Right cardiac atrium (tissue), 5 donors: ENCODE measurements at regions of chr1 and their contacts with region 1.

Region 1: GRCh38 chr1:231211005-231211857 is 29.8 kb upstream of the GNPAT start:
- DNase-seq: peak; percentile 64 to 88 (median 87)
- ATAC-seq: peak; percentile 73 to 79
- H3K4me3 ChIP-seq: no peak overlapping the region
- H3K27ac ChIP-seq: no peak overlapping the region
- H3K4me1 ChIP-seq: no peaks in the 10 kb centered on the region
- H3K27me3 ChIP-seq: no peaks in the 10 kb centered on the region

Region 2: GRCh38 chr1:230797942-230798418 is 413.3 kb before region 1 on chr1:
- intact Hi-C with region 1: loop called (anchors 5 kb)
- DNase-seq: peak; percentile 59 to 76 (median 71)
- ATAC-seq: peak; percentile 86 to 88
- H3K4me3 ChIP-seq: no peak overlapping the region
- H3K27ac ChIP-seq: no peak overlapping the region
- H3K4me1 ChIP-seq: no peaks in the 10 kb centered on the region
- H3K27me3 ChIP-seq: no peaks in the 10 kb centered on the region

Region 3: DNA sequence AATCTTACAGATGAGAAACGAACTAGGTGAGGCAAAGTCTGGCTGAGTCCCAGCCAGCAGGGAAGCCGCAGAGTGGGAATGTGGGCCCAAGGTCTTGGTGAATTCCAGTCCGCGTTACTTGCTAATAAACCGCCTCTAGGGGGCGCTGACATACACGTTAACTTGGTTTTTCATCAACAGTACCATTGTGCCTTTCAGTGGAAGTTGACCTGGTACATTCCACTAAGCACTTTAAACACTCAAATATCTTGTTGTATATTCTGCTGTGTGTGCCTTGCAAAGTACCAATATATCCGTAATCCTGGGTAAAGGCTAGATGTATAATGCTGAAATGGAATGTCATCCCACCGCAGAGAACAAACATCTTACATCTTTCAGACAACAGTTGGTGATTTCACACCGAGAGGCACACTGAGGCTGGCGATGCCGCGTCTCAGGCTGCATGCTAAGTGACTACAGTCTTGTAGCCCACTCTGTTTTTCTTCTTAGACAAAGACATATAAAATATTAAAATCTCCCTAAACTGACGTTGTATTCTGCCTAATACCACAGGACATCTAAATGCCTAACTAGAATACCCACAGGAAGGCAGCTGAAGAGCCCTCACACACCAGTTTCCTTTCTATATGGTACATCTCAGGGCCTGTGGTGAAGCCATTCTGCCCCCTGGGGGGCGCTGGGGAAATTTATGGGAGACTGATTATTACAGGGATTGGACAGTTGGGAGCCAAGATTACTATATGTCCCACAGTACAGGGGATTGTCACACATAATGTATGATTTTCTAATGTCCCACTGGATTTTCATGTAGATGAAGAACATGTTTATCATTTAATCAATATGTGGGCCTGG is 293.7 kb before region 1 on chr1:
- intact Hi-C with region 1: loop called in 2 of 4 experiments (anchors 5 to 10 kb)
- DNase-seq: peak; percentile 68 to 84 (median 79)
- ATAC-seq: peak; percentile 80 to 84
- H3K4me3 ChIP-seq: no peak overlapping the region
- H3K27ac ChIP-seq: no peak overlapping the region
- H3K4me1 ChIP-seq: no peaks in the 10 kb centered on the region
- H3K27me3 ChIP-seq: no peaks in the 10 kb centered on the region